ENCODE measurements at regions of chr3 and their contacts with region 1.

Region 1: GRCh38 chr3:129160891-129161859 is at the start of gene ISY1:
- DNase-seq: peak; percentile 97
- ATAC-seq: peak; percentile 85
- H3K4me3 ChIP-seq: peak within 1 kb of the TSS; percentile 73 to 99 (median 83)
- H3K4me3 Mint-ChIP-seq: peak within 1 kb of the TSS; percentile 100
- H3K27ac ChIP-seq: peak within 1 kb of the TSS; percentile 92 to 99
- H3K27ac Mint-ChIP-seq: peak within 1 kb of the TSS; percentile 100
- H3K4me1 ChIP-seq: peaks cover 18 to 24% of the 10 kb centered on the region in 2 donors
- H3K4me1 Mint-ChIP-seq: peaks cover 40% of the 10 kb centered on the region
- H3K27me3 ChIP-seq: no peaks in the 10 kb centered on the region
- H3K27me3 Mint-ChIP-seq: no peaks in the 10 kb centered on the region
- CTCF ChIP-seq: peak; percentile 83
- total RNA-seq, gene ISY1: 42.2 and 49.6 TPM in 2 replicates

Region 2: GRCh38 chr3:128698211-128699064 is 462.7 kb before region 1 on chr3:
- CTCF ChIA-PET with region 1: no interaction called
- POLR2A ChIA-PET with region 1: no interaction called
- intact Hi-C with region 1: no loop called
- DNase-seq: peak; percentile 42
- ATAC-seq: peak; percentile 39
- H3K4me3 ChIP-seq: peak overlapping the region; percentile 21 to 78 (median 62)
- H3K4me3 Mint-ChIP-seq: peak overlapping the region; percentile 84
- H3K27ac ChIP-seq: no peak overlapping the region
- H3K27ac Mint-ChIP-seq: no peak overlapping the region
- H3K4me1 ChIP-seq: peaks cover 3 to 9% of the 10 kb centered on the region in 2 donors
- H3K4me1 Mint-ChIP-seq: peaks cover 3% of the 10 kb centered on the region
- H3K27me3 ChIP-seq: peaks cover 0 to 5% (median 0%) of the 10 kb centered on the region in 4 experiments
- H3K27me3 Mint-ChIP-seq: no peaks in the 10 kb centered on the region
- CTCF ChIP-seq: no peak

Region 3: GRCh38 chr3:129026728-129027543 is 134.2 kb before region 1 on chr3:
- CTCF ChIA-PET with region 1: interaction called, 4 read pairs
- POLR2A ChIA-PET with region 1: no interaction called
- intact Hi-C with region 1: loop called (anchors 1 kb)
- DNase-seq: peak; percentile 95
- ATAC-seq: peak; percentile 98
- H3K4me3 ChIP-seq: peak overlapping the region; percentile 30 to 71 (median 61)
- H3K4me3 Mint-ChIP-seq: peak overlapping the region; percentile 91
- H3K27ac ChIP-seq: peak overlapping the region; percentile 74 to 83
- H3K27ac Mint-ChIP-seq: peak overlapping the region; percentile 95
- H3K4me1 ChIP-seq: peaks cover 13 to 15% of the 10 kb centered on the region in 2 donors
- H3K4me1 Mint-ChIP-seq: peaks cover 22% of the 10 kb centered on the region
- H3K27me3 ChIP-seq: peaks cover 0 to 6% (median 0%) of the 10 kb centered on the region in 4 experiments
- H3K27me3 Mint-ChIP-seq: peaks cover 3% of the 10 kb centered on the region
- CTCF ChIP-seq: peak; percentile 91

Region 4: DNA sequence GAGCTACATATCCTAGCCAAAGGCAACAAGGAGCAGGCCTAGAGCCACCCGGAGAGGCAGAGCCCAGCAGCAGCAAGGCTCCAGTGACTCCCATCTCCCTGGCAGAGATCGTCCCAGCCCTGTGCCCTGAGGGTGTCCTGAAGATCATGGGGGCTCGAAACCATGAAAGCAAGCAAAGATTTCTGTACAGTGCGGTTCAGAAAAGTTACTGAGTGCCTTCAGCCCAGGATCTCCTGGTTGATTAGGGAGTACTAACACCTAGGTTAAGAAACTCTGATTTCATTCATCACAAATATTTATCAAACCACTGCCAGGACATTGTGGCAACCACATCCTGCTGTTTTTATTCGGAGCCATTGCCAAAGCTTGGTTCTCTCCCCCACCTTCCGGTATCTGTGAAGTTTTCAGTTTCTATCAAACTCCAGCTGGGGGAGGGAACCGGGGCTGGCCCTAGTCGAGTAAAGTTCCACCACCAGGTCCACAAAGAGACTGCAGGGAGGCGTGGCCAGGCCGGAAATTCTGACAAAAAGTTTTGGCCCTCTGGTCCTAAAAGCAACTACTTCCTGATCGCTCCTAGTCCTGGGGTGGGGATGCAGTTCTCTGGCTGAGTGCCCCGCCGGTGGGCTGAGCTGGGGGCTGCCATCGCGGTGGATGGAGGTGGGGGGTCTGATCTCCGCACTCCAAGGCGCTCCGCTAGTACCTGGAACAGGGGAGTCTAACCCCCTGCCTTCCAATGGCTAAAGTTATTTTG is 40.7 kb before region 1 on chr3:
- CTCF ChIA-PET with region 1: interaction called, 8 read pairs
- POLR2A ChIA-PET with region 1: interaction called, 3 read pairs
- intact Hi-C with region 1: loop called (anchors 1 kb)
- DNase-seq: peak; percentile 93
- ATAC-seq: peak; percentile 61
- H3K4me3 ChIP-seq: peak overlapping the region; percentile 68 to 81 (median 76)
- H3K4me3 Mint-ChIP-seq: peak overlapping the region; percentile 88
- H3K27ac ChIP-seq: peak overlapping the region; percentile 61 to 62
- H3K27ac Mint-ChIP-seq: peak overlapping the region; percentile 84
- H3K4me1 ChIP-seq: peaks cover 42 to 46% of the 10 kb centered on the region in 2 donors
- H3K4me1 Mint-ChIP-seq: peaks cover 53% of the 10 kb centered on the region
- H3K27me3 ChIP-seq: no peaks in the 10 kb centered on the region
- H3K27me3 Mint-ChIP-seq: no peaks in the 10 kb centered on the region
- CTCF ChIP-seq: peak; percentile 30

Region 5: GRCh38 chr3:129278439-129278970 is 117.3 kb after region 1 on chr3 and contains the start of gene HMCES:
- CTCF ChIA-PET with region 1: no interaction called
- POLR2A ChIA-PET with region 1: no interaction called
- intact Hi-C with region 1: loop called (anchors 1 kb)
- DNase-seq: peak; percentile 94
- ATAC-seq: peak; percentile 72
- H3K4me3 ChIP-seq: peak within 1 kb of the TSS; percentile 79 to 92 (median 88)
- H3K4me3 Mint-ChIP-seq: peak within 1 kb of the TSS; percentile 95
- H3K27ac ChIP-seq: peak within 1 kb of the TSS; percentile 86
- H3K27ac Mint-ChIP-seq: peak within 1 kb of the TSS; percentile 91
- H3K4me1 ChIP-seq: peaks cover 67 to 73% of the 10 kb centered on the region in 2 donors
- H3K4me1 Mint-ChIP-seq: peaks cover 73% of the 10 kb centered on the region
- H3K27me3 ChIP-seq: peaks cover 0 to 4% (median 0%) of the 10 kb centered on the region in 4 experiments
- H3K27me3 Mint-ChIP-seq: peaks cover 5% of the 10 kb centered on the region
- CTCF ChIP-seq: no peak
- total RNA-seq, gene HMCES: 22.1 and 22.5 TPM in 2 replicates

Region 6: DNA sequence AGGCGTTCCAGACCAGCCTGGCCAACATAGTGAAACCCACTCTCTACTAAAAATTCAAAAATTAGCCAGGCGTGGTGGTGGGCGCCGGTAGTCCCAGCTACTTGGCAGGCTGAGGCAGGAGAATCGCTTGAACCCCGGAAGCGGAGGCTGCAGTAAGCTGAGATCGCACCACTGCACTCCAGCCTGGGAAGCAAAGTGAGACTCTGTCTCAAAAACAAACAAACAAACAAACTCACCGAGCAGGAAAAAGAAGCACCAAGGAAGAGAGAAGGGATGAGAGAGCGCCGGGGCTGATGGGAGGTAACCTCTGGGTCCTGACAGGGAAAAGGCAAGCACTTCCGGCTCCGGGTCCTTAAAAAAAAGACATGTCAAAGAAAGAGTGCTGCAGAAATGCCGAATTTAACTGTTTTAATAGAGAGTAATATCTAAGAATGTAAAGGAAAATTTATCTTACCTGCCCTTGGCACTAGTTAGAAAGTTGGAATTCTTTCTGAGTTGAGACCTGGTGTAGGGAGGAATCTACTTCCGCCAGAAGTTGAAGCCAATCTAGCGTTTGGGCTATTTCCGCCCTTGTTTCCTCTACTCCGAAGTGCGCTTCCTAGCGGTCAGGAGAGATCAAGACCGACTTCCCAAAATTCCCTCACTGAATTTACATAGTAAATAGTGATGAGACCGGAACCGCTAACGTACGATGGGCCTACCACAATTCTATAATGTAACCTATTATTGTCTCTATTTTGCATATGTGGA is 238.1 kb after region 1 on chr3:
- CTCF ChIA-PET with region 1: no interaction called
- POLR2A ChIA-PET with region 1: no interaction called
- intact Hi-C with region 1: loop called (anchors 1 kb)
- DNase-seq: peak; percentile 94
- ATAC-seq: peak; percentile 86
- H3K4me3 ChIP-seq: peak overlapping the region; percentile 76 to 99 (median 89)
- H3K4me3 Mint-ChIP-seq: peak overlapping the region; percentile 96
- H3K27ac ChIP-seq: peak overlapping the region; percentile 88 to 95
- H3K27ac Mint-ChIP-seq: peak overlapping the region; percentile 94
- H3K4me1 ChIP-seq: peaks cover 20 to 22% of the 10 kb centered on the region in 2 donors
- H3K4me1 Mint-ChIP-seq: peaks cover 35% of the 10 kb centered on the region
- H3K27me3 ChIP-seq: no peaks in the 10 kb centered on the region
- H3K27me3 Mint-ChIP-seq: no peaks in the 10 kb centered on the region
- CTCF ChIP-seq: peak; percentile 90

Measured in B cell (primary cell).